CD8-positive, alpha-beta T cell (primary cell): ENCODE measurements at regions of chr12 and their contacts with region 1.

Region 1: DNA sequence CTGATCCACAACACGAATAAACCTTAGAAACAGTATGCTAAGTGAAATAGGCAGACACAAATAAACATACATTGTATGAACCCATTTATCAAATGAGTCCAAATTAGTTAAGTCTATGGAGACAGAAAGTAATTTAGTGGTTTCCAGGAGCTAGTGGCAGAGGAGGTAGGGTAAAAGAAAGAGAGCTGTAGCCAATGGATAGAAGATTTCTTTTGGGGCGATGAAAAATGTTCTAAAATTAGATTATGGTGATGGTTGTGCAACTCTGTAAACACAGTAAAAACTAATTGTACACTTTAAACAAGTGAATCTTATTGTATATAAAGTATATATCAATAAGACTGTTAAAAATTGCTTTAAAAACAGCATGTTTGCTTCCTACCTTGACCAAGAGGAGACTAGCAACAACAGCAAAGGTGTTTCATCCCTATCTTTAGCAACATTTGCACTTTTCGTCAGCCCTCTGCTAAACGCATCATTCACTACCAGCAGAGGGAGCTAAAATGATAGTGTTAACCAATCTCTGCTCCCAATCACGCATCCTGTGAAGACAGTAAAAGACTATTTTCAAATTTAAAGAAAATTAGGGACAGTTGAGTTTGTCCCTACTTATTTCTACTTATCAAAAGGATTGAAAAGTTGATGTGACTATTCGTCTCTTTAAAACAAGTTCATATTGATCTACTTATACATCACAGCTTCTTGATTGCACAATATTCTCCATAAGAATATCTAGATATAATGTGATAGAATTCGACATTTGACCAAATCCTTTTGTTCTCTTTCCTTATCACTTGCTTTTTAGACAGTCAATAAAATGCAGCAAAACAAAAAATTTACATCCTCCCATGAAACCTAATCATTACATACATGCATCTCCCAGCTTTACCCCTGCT is 24.0 kb upstream of the LGR5 start:
- DNase-seq: peak in 3 of 9 experiments; percentile 9 to 66 (median 54)
- ATAC-seq: no peak
- H3K4me3 ChIP-seq: no peak overlapping the region
- H3K4me3 Mint-ChIP-seq: no peak overlapping the region
- H3K27ac ChIP-seq: no peak overlapping the region
- H3K27ac Mint-ChIP-seq: no peak overlapping the region
- H3K4me1 ChIP-seq: no peaks in the 10 kb centered on the region
- H3K4me1 Mint-ChIP-seq: no peaks in the 10 kb centered on the region
- H3K27me3 ChIP-seq: no peaks in the 10 kb centered on the region
- H3K27me3 Mint-ChIP-seq: peaks cover 3% of the 10 kb centered on the region
- CTCF ChIP-seq: peak; percentile 68

Region 2: GRCh38 chr12:71551529-71551928 is 135.9 kb after region 1 on chr12:
- CTCF ChIA-PET with region 1: interaction called, 5 read pairs
- POLR2A ChIA-PET with region 1: no interaction called
- intact Hi-C with region 1: loop called in 1 of 2 experiments (anchors 5 kb)
- DNase-seq: peak in 1 of 9 experiments; percentile 2
- ATAC-seq: no peak
- H3K4me3 ChIP-seq: no peak overlapping the region
- H3K4me3 Mint-ChIP-seq: no peak overlapping the region
- H3K27ac ChIP-seq: no peak overlapping the region
- H3K27ac Mint-ChIP-seq: no peak overlapping the region
- H3K4me1 ChIP-seq: no peaks in the 10 kb centered on the region
- H3K4me1 Mint-ChIP-seq: no peaks in the 10 kb centered on the region
- H3K27me3 ChIP-seq: no peaks in the 10 kb centered on the region
- H3K27me3 Mint-ChIP-seq: peaks cover 3% of the 10 kb centered on the region
- CTCF ChIP-seq: no peak